Activated naive CD4-positive, alpha-beta T cell treated with anti-CD3 and anti-CD28 coated beads, Interleukin-2, amount 10 ng/mL, durations not matched to agents 7 days and 5 days (primary cell): ENCODE measurements at regions of chr2 and their contacts with region 1.

Region 1: DNA sequence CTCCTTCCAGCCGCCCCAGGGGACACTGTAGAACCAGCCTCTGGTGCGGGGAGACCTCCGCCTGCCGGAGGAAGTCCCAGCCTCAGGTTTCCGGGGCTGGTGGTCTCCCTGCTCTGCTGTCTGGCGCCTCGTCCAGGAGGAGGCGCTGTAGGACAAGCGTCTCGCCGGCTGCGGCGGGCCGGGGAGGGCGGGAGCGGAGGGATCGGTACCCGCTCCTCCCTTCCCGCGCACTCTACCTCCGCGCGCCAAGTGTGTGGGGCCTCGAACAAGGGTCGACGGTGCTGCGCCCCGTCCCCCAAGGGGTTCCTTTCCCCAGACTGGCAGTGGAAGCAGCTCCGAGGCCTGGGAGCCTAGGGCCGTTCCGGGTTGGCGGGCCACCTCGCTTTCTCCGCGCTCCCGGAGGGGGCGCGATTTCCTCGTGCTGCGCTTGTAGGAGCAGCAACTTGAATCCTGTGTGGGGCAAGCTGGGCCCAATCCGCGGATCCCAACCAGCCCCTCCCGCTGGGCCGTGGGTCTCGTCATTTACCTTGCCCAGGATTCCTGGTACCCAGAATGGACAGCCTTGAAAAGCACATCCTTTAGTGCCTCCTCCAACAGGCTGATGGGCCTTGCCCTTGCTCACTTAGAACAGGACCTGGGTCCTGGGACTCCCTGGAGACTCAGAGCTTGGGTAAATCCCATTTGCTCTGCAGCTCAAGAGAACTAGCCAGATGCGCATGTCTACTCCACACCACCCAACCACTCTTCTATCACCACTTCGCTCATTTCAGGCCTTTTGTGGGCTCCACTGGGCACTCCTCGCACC is 10.6 kb upstream of the HOXD4 start:
- DNase-seq: peak; percentile 78
- H3K4me3 Mint-ChIP-seq: peak overlapping the region; percentile 14
- H3K27ac Mint-ChIP-seq: no peak overlapping the region
- H3K4me1 Mint-ChIP-seq: peaks cover 16% of the 10 kb centered on the region
- H3K27me3 Mint-ChIP-seq: peaks cover 99% of the 10 kb centered on the region

Region 2: DNA sequence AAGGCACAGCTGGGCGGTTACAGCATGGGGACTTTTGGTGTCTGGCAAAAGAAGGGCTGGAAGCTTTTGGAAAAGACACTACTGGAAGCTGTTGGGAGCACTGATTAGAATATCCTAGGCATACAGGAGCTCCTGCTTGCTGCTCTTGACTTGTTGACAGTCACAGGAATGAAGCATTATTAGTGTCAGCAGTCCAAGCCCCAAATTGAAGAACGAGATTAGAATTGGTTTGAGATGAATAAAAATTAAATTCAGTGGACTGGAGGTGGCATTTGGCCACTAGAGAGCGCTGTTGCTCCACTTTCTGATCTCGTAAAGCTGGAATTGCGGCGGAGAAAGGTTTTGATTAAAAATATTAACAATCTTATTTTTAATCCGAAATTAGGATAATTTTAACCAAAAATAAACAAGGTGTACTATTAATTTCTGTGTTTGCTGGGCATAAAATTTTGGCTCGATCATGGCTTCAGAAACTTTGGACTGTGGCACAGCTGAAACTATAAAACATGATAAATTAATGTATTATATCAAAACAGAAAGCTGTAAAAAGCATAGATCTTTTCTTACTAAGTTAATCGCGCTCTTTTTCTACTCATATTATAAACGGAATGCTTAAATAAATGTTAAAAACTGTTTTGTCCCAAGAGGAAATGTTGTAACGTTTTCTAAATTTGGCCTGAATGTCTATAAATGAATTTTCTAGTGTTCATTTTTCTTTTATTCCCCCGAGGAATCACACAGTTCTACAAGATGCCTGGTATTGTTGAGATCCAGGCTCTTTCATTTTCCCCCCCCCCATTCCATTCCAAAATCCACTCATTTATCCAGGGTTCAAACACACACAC is 13.6 kb before region 1 on chr2:
- CTCF ChIA-PET with region 1: interaction called, 19 read pairs
- DNase-seq: peak; percentile 75
- H3K4me3 Mint-ChIP-seq: no peak overlapping the region
- H3K27ac Mint-ChIP-seq: peak overlapping the region; percentile 82
- H3K4me1 Mint-ChIP-seq: peaks cover 25% of the 10 kb centered on the region
- H3K27me3 Mint-ChIP-seq: peaks cover 95% of the 10 kb centered on the region

Region 3: DNA sequence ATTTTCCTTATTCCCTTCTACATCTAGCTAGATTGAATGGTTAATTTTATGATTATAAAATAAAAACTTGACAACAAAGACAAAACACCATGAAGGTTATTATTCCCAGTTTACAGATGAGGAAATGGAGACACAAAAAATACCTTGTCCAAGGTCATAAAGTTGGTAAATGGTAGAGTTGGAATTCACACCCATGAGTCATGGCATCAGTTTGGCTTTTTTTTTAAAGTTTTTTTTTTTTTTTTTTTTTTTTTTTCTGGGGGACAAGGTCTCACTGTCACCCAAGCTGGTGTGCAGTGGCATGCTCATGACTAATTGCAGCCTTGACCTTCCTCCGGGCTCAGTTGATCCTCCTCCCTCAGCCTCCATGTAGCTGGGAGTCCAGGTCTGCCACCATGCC is 198.5 kb after region 1 on chr2:
- CTCF ChIA-PET with region 1: no interaction called
- DNase-seq: no peak
- H3K4me3 Mint-ChIP-seq: no peak overlapping the region
- H3K27ac Mint-ChIP-seq: no peak overlapping the region
- H3K4me1 Mint-ChIP-seq: no peaks in the 10 kb centered on the region
- H3K27me3 Mint-ChIP-seq: no peaks in the 10 kb centered on the region

Region 4: DNA sequence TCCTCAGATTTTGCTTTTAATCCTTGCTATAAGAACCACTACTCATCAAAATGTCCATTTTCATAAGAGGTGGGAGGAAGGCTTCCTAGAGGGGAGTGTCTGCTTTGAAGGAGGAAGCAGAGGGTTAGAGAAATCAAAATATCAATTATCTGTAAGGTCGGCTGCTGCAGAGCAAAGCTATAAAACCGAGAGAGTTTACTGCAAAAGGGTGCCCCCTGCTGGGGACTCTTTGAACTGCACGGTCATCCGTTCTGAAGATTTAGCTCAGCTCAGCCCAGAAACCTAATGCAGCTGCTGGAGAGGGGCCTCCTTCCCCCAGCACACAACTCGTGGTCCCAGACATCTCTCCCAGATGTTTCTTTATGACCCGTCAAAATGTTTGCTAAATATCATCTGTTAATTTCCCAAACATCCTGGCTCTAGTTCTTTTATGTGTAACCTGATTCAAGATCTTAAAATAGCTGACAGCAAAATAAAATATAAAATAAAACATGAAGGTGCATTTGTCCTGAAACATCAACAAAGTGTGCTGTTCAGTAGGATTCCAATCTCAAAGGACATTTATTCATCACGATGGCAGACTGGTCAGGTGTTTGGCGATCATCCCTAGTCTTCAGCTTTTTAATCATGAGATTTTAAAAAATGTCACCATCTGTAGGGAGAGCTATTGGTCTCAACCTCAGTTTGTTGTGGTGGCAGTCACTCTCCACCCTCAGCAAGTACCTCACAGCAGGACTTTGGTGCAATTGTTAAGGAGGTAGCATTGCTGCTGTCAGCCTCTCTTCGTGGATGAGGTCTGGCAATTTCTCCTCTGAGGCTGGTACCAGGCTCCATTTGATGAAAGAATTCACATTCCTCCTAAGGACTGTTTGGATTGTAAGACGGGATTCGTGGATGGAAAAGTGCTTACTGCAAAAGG is 314.4 kb after region 1 on chr2:
- CTCF ChIA-PET with region 1: interaction called, 140 read pairs
- DNase-seq: peak; percentile 87
- H3K4me3 Mint-ChIP-seq: no peak overlapping the region
- H3K27ac Mint-ChIP-seq: no peak overlapping the region
- H3K4me1 Mint-ChIP-seq: no peaks in the 10 kb centered on the region
- H3K27me3 Mint-ChIP-seq: peaks cover 40% of the 10 kb centered on the region

Region 5: DNA sequence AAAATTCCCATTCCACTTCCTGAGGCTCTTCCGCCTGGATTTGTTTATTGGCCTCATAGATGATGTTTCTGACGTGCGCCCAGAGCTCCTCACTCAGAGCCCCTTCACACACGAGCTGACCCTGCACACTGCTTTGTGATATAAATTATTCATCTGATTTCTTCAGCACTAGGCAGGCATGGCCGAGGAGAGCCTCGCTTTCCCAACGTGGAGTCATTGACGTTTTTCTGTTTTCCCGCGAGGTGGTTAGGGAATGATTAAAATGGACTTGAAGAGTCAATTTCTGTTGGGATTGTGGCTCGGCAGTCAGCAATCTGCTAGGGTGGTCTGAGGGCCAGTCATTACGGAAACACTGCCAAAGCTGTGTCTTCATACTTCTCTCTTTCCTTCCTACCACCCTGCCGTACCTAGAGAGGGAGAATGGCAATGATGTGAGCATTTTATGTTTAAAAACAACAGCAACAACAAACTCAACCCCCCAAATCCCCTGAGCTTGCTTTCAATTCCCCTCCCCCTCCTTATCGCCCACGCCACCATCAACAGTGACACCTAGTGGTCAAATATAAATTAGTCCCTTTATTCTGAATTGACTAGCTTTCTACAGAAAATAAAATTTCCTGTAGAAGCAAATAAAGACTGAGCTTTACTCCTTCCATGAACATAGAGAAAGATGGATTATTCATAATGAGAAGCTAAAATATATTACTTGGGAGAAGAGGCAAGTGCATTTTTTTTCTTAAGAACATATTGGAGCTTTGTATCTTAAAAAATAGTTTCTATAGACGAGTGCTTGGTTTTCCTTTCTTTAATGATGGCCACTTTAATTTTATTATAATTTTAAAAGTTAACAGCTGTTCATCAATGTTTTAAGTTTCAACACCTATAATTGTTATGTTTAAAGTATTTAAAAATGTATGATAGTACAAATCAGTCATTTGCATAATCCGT is 413.7 kb after region 1 on chr2:
- CTCF ChIA-PET with region 1: interaction called, 37 read pairs
- DNase-seq: peak; percentile 25
- H3K4me3 Mint-ChIP-seq: peak overlapping the region; percentile 66
- H3K27ac Mint-ChIP-seq: no peak overlapping the region
- H3K4me1 Mint-ChIP-seq: peaks cover 12% of the 10 kb centered on the region
- H3K27me3 Mint-ChIP-seq: peaks cover 47% of the 10 kb centered on the region

Region 6: GRCh38 chr2:176653479-176654443 is 513.0 kb after region 1 on chr2:
- CTCF ChIA-PET with region 1: interaction called, 21 read pairs
- DNase-seq: peak; percentile 52
- H3K4me3 Mint-ChIP-seq: no peak overlapping the region
- H3K27ac Mint-ChIP-seq: no peak overlapping the region
- H3K4me1 Mint-ChIP-seq: peaks cover 5% of the 10 kb centered on the region
- H3K27me3 Mint-ChIP-seq: peaks cover 19% of the 10 kb centered on the region